ENCODE measurements at regions of chr13 and their contacts with region 1.

Region 1: GRCh38 chr13:48562296-48563066 is 29.6 kb upstream of the RCBTB2 start:
- DNase-seq: peak; percentile 95
- ATAC-seq: peak; percentile 92
- H3K4me3 Mint-ChIP-seq: peak overlapping the region; percentile 40
- H3K27ac Mint-ChIP-seq: peak overlapping the region; percentile 90
- H3K4me1 Mint-ChIP-seq: peaks cover 65% of the 10 kb centered on the region
- H3K27me3 Mint-ChIP-seq: peaks cover 35% of the 10 kb centered on the region

Region 2: DNA sequence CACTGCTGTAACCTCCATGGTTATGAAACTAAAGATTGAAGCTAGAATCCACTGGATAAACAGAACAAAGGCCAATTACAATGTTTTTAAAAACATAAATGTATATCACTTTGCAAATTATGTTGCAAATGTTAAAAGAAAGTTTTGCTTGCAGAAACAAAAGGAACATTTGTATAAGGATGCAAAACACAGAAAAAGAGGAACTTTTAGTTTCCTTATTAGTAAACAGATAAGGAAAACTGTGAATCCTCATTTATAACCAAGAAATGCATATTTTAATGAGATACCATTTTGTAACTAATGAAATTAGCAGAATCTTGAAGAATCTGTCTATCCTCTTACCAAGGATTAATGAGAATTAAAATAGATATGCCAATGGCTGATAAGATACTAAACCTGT is 181.9 kb before region 1 on chr13:
- CTCF ChIA-PET with region 1: no interaction called
- DNase-seq: no peak
- ATAC-seq: no peak
- H3K4me3 Mint-ChIP-seq: no peak overlapping the region
- H3K27ac Mint-ChIP-seq: no peak overlapping the region
- H3K4me1 Mint-ChIP-seq: no peaks in the 10 kb centered on the region
- H3K27me3 Mint-ChIP-seq: no peaks in the 10 kb centered on the region

Region 3: GRCh38 chr13:48492470-48493065 is 69.9 kb before region 1 on chr13:
- CTCF ChIA-PET with region 1: interaction called, 14 read pairs
- DNase-seq: peak; percentile 92
- ATAC-seq: peak; percentile 85
- H3K4me3 Mint-ChIP-seq: no peak overlapping the region
- H3K27ac Mint-ChIP-seq: no peak overlapping the region
- H3K4me1 Mint-ChIP-seq: peaks cover 63% of the 10 kb centered on the region
- H3K27me3 Mint-ChIP-seq: no peaks in the 10 kb centered on the region

Region 4: GRCh38 chr13:48505597-48506091 is 56.8 kb before region 1 on chr13:
- CTCF ChIA-PET with region 1: interaction called, 18 read pairs
- DNase-seq: peak; percentile 83
- ATAC-seq: peak; percentile 83
- H3K4me3 Mint-ChIP-seq: peak overlapping the region; percentile 7
- H3K27ac Mint-ChIP-seq: peak overlapping the region; percentile 98
- H3K4me1 Mint-ChIP-seq: peaks cover 83% of the 10 kb centered on the region
- H3K27me3 Mint-ChIP-seq: no peaks in the 10 kb centered on the region

Region 5: GRCh38 chr13:48532506-48533499 is 29.7 kb before region 1 on chr13 and contains the start of gene RCBTB2:
- CTCF ChIA-PET with region 1: interaction called, 11 read pairs
- DNase-seq: peak; percentile 99
- ATAC-seq: peak; percentile 94
- H3K4me3 Mint-ChIP-seq: peak within 1 kb of the TSS; percentile 81
- H3K27ac Mint-ChIP-seq: peak within 1 kb of the TSS; percentile 96
- H3K4me1 Mint-ChIP-seq: peaks cover 43% of the 10 kb centered on the region
- H3K27me3 Mint-ChIP-seq: no peaks in the 10 kb centered on the region
- total RNA-seq, gene RCBTB2: 17.0 to 22.5 TPM

Region 6: GRCh38 chr13:48600374-48601364 is 38.2 kb after region 1 on chr13:
- CTCF ChIA-PET with region 1: no interaction called
- DNase-seq: no peak
- ATAC-seq: no peak
- H3K4me3 Mint-ChIP-seq: no peak overlapping the region
- H3K27ac Mint-ChIP-seq: no peak overlapping the region
- H3K4me1 Mint-ChIP-seq: peaks cover 8% of the 10 kb centered on the region
- H3K27me3 Mint-ChIP-seq: peaks cover 9% of the 10 kb centered on the region

Measured in activated CD8-positive, alpha-beta memory T cell treated with anti-CD3 and anti-CD28 coated beads, Interleukin-2, amount 10 ng/mL, durations not matched to agents 7 days and 5 days (primary cell).